ENCODE measurements at regions of chr5 and their contacts with region 1.

Region 1: GRCh38 chr5:112921833-112922817 is at the start of gene REEP5:
- DNase-seq: peak; percentile 65 to 94 (median 79)
- ATAC-seq: peak; percentile 83 to 91 (median 88)
- H3K4me3 ChIP-seq: peak within 1 kb of the TSS; percentile 89 to 97
- H3K4me3 Mint-ChIP-seq: peak within 1 kb of the TSS; percentile 78 to 94 (median 90)
- H3K27ac ChIP-seq: peak within 1 kb of the TSS; percentile 77
- H3K27ac Mint-ChIP-seq: peak within 1 kb of the TSS; percentile 94 to 95
- H3K4me1 ChIP-seq: peaks cover 17 to 52% of the 10 kb centered on the region in 2 experiments
- H3K4me1 Mint-ChIP-seq: peaks cover 58 to 70% (median 64%) of the 10 kb centered on the region in 3 donors
- H3K27me3 ChIP-seq: no peaks in the 10 kb centered on the region
- H3K27me3 Mint-ChIP-seq: no peaks in the 10 kb centered on the region
- total RNA-seq, gene REEP5: 23.0 to 71.1 (median 53.2) TPM

Region 2: DNA sequence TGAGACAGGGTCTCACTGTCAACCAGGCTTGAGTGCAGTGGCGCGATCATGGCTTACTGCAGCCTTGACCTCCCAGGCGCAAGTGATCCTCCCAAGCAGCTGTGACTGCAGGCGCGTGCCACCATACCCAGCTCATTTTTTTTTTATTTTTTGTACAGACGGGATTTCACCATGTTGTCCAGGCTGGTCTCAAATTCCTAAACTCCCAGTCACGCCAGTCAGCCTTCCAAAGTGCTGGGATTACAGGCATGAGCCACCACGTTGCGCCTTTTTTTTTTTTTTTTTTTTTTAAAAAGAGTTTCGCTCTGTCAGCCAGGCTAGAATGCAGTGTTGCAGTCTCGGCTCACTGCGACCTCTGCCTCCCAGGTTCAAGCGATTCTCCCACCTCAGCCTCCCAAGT is 88.2 kb before region 1 on chr5:
- CTCF ChIA-PET with region 1: interaction called, 3 to 14 read pairs
- POLR2A ChIA-PET with region 1: no interaction called
- DNase-seq: no peak
- ATAC-seq: no peak
- H3K4me3 ChIP-seq: no peak overlapping the region
- H3K4me3 Mint-ChIP-seq: no peak overlapping the region
- H3K27ac ChIP-seq: no peak overlapping the region
- H3K27ac Mint-ChIP-seq: no peak overlapping the region
- H3K4me1 ChIP-seq: no peaks in the 10 kb centered on the region
- H3K4me1 Mint-ChIP-seq: no peaks in the 10 kb centered on the region
- H3K27me3 ChIP-seq: no peaks in the 10 kb centered on the region
- H3K27me3 Mint-ChIP-seq: no peaks in the 10 kb centered on the region

Region 3: DNA sequence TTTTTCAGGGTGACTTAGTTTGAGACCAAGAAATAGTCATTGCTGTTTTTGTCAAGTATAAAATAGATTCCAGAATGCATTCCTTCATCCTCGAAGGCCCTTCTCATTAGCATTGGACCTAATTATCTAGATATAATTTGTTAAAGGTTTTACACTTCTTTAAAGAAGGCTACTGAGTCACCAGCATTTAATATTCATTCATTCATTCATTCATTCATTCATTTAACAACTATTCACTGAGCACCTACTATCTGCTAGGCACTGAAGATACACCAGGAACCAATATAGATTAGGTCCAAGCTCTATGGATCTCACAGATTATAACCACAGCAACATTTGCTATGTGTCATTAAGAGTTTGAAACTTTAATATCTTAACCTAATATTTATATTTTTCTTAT is 11.0 kb after region 1 on chr5:
- CTCF ChIA-PET with region 1: no interaction called
- POLR2A ChIA-PET with region 1: no interaction called
- DNase-seq: no peak
- ATAC-seq: no peak
- H3K4me3 ChIP-seq: no peak overlapping the region
- H3K4me3 Mint-ChIP-seq: no peak overlapping the region
- H3K27ac ChIP-seq: no peak overlapping the region
- H3K27ac Mint-ChIP-seq: no peak overlapping the region
- H3K4me1 ChIP-seq: peaks cover 29 to 31% of the 10 kb centered on the region in 2 experiments
- H3K4me1 Mint-ChIP-seq: peaks cover 34 to 49% (median 41%) of the 10 kb centered on the region in 3 donors
- H3K27me3 ChIP-seq: no peaks in the 10 kb centered on the region
- H3K27me3 Mint-ChIP-seq: no peaks in the 10 kb centered on the region

Region 4: DNA sequence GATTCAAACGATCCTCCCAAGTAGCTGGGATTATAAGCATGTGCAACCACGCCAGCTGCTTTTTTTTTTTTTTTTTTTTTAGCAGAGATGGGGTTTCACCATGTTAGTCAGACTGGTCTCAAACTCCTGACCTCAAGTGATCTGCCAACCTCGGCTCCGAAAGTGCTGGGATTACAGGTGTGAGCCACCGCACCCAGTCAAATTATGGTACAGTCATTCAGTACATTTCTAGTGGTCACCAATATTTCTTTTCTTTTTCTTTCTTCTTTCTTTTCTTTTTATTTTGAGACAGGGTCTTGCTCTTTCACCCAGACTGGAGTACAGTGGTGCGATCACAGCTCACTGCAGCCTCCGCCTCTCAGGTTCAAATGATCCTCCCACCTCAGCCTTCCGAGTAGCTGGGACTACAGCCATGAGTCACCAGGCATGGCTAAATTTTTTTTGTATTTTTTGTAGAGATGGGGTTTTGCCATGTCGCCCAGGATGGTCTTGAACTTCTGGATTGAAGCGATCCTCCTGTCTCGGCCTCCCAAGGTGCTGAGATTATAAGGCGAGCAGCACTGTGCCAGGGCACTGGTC is 29.1 kb after region 1 on chr5:
- CTCF ChIA-PET with region 1: interaction called in 1 of 2 experiments, 3 read pairs
- POLR2A ChIA-PET with region 1: interaction called in 1 of 2 experiments, 10 read pairs
- DNase-seq: no peak
- ATAC-seq: no peak
- H3K4me3 ChIP-seq: no peak overlapping the region
- H3K4me3 Mint-ChIP-seq: no peak overlapping the region
- H3K27ac ChIP-seq: no peak overlapping the region
- H3K27ac Mint-ChIP-seq: no peak overlapping the region
- H3K4me1 ChIP-seq: no peaks in the 10 kb centered on the region
- H3K4me1 Mint-ChIP-seq: peaks cover 5 to 7% (median 5%) of the 10 kb centered on the region in 3 donors
- H3K27me3 ChIP-seq: peaks cover 0 to 5% of the 10 kb centered on the region in 2 experiments
- H3K27me3 Mint-ChIP-seq: no peaks in the 10 kb centered on the region

Measured in T-cell (primary cell).